ENCODE measurements at regions of chr14 and their contacts with region 1.

Region 1: DNA sequence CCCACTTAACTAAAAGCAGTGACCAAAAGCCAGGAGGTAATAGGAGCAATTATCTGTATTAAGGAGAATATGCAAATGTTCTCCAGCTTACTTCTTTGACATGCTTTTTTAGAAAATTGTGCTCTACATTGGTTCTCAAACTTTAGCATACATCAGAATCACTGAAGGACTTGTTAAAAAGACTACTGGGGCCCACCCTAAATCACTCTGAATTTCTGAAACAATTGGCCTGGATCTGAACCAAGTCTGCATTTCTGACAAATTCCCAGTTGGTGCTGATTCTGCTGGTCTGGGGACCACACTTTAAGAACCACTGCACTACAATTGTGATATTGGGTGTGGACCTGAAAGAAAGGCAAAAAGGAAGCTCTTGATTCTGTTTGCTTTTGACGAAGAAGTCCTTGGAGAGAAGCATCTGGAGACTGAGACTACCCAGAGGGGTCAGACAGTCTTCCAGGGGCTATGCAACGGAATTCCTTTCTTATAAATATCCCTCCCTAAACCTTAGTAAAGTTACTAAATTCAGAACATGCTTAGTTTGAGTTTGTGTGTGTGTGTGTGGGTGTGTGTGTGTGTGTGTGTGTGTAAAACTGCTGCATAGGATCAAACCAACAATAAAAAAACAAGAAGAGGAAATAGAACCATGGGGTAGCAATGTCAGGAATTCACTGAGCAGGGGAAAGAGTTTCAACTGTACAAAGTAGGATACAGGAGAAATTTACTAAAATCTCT is 36.8 kb downstream of the EAPP start:
- DNase-seq: no peak
- ATAC-seq: no peak
- H3K4me3 ChIP-seq: no peak overlapping the region
- H3K27ac ChIP-seq: no peak overlapping the region
- H3K4me1 ChIP-seq: peaks cover 49% of the 10 kb centered on the region
- H3K27me3 ChIP-seq: no peaks in the 10 kb centered on the region
- CTCF ChIP-seq: no peak
- EP300 ChIP-seq: no peak
- POLR2A ChIP-seq: no peak
- RAD21 ChIP-seq: no peak

Region 2: GRCh38 chr14:32509632-32510187 is 1993.0 kb before region 1 on chr14:
- CTCF ChIA-PET with region 1: no interaction called
- POLR2A ChIA-PET with region 1: no interaction called
- in situ Hi-C with region 1: no loop called
- intact Hi-C with region 1: loop called (anchors 5 kb)
- DNase-seq: peak; percentile 50
- ATAC-seq: peak; percentile 76
- H3K4me3 ChIP-seq: no peak overlapping the region
- H3K27ac ChIP-seq: no peak overlapping the region
- H3K4me1 ChIP-seq: 0 out of 2 replicates have a peak, but pooled peaks cover 6% of the 10 kb centered on the region
- H3K27me3 ChIP-seq: no peaks in the 10 kb centered on the region
- CTCF ChIP-seq: no peak
- EP300 ChIP-seq: no peak
- POLR2A ChIP-seq: no peak
- RAD21 ChIP-seq: no peak

Region 3: GRCh38 chr14:34258318-34258717 is 244.3 kb before region 1 on chr14:
- CTCF ChIA-PET with region 1: no interaction called
- POLR2A ChIA-PET with region 1: no interaction called
- in situ Hi-C with region 1: no loop called
- intact Hi-C with region 1: no loop called
- DNase-seq: no peak
- ATAC-seq: no peak
- H3K4me3 ChIP-seq: no peak overlapping the region
- H3K27ac ChIP-seq: no peak overlapping the region
- H3K4me1 ChIP-seq: no peaks in the 10 kb centered on the region
- H3K27me3 ChIP-seq: no peaks in the 10 kb centered on the region; a peak in 1 of 5 replicates
- CTCF ChIP-seq: no peak
- EP300 ChIP-seq: no peak
- POLR2A ChIP-seq: no peak
- RAD21 ChIP-seq: no peak

Region 4: DNA sequence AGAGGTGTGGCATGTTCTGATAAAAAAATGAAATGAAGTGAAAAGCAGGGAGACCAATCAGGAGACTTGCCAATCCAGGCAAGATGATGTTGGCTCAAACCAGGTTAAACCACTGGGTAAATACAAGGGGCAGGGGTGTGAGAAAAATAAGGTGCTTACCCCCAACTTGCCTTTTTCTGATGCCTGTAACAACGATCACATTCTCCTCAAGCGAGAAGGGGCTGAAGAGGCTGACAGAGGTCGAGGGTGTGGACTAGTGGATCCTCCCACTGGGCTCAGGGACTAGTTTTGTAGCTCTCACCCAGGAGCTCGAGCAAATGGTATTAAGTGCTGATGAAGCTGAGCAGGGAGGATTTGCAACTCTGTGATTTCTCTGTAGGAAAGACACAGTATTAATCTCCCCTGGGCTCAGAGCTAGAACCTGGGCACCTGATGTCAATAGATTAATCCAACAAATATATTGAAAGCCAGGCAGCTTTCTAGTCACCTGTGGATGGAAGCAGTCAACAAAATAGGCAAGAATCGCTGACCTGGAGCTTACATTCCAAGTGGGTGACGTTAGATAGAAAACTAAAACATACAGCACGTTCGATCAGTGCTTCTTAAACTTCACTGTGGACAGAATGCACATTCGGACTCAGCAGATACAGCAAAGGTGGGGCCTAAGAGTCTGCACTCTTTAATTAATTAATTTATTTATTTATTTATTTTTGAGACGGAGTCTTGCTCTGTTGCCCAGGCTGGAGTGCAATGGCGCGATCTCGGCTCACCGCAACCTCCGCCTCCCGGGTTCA is 52.1 kb after region 1 on chr14:
- CTCF ChIA-PET with region 1: no interaction called
- POLR2A ChIA-PET with region 1: no interaction called
- in situ Hi-C with region 1: no loop called
- intact Hi-C with region 1: no loop called
- DNase-seq: no peak
- ATAC-seq: no peak
- H3K4me3 ChIP-seq: peak overlapping the region; percentile 0 to 47 (median 20); a peak in 4 of 6 replicates
- H3K27ac ChIP-seq: peak overlapping the region; percentile 37
- H3K4me1 ChIP-seq: peaks cover 14% of the 10 kb centered on the region
- H3K27me3 ChIP-seq: no peaks in the 10 kb centered on the region
- CTCF ChIP-seq: no peak
- EP300 ChIP-seq: no peak
- POLR2A ChIP-seq: peak in 1 of 2 experiments; percentile 64; a peak in 2 of 4 replicates
- RAD21 ChIP-seq: no peak

Region 5: DNA sequence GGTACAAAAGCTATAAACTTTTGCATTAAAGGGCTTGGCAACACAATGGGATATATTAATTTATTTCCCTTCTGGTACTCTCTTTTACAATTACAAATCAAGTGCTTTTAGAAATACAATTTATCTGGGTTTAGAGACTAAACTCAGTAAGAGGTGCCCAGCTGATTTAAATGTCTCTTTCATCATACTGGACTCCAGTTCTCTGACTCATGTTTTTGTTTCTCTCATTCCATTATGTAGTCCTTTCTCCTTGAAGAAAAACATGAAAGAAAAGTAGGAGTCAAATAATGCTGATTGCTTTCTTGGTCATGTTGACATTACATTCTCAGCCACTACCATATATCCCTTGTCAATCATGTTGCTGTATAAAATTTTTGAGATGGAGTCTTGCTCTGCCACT is 248.0 kb after region 1 on chr14:
- CTCF ChIA-PET with region 1: no interaction called
- POLR2A ChIA-PET with region 1: no interaction called
- in situ Hi-C with region 1: no loop called
- intact Hi-C with region 1: no loop called
- DNase-seq: no peak
- ATAC-seq: no peak
- H3K4me3 ChIP-seq: no peak overlapping the region
- H3K27ac ChIP-seq: no peak overlapping the region
- H3K4me1 ChIP-seq: no peaks in the 10 kb centered on the region
- H3K27me3 ChIP-seq: no peaks in the 10 kb centered on the region
- CTCF ChIP-seq: no peak
- EP300 ChIP-seq: no peak
- POLR2A ChIP-seq: no peak
- RAD21 ChIP-seq: no peak